Aorta (tissue), 5 donors: ENCODE measurements at regions of chr5 and their contacts with region 1.

Region 1: GRCh38 chr5:132490486-132491367 is at the start of gene IRF1:
- DNase-seq: peak; percentile 98 to 99
- ATAC-seq: peak; percentile 95
- H3K4me3 ChIP-seq: peak within 1 kb of the TSS; percentile 40 to 57
- H3K27ac ChIP-seq: peak within 1 kb of the TSS; percentile 39 to 79
- H3K4me1 ChIP-seq: no peaks in the 10 kb centered on the region
- H3K27me3 ChIP-seq: no peaks in the 10 kb centered on the region
- total RNA-seq, gene IRF1: 26.8 to 36.1 TPM

Region 2: GRCh38 chr5:132260714-132261551 is 229.8 kb before region 1 on chr5:
- intact Hi-C with region 1: loop called (anchors 10 kb)
- DNase-seq: peak; percentile 79 to 84
- ATAC-seq: no peak
- H3K4me3 ChIP-seq: no peak overlapping the region
- H3K27ac ChIP-seq: peak overlapping the region in 1 of 2 donors; percentile 13
- H3K4me1 ChIP-seq: no peaks in the 10 kb centered on the region
- H3K27me3 ChIP-seq: no peaks in the 10 kb centered on the region

Region 3: GRCh38 chr5:132410451-132411381 is 80.0 kb before region 1 on chr5:
- intact Hi-C with region 1: loop called in 1 of 2 experiments (anchors 2 kb)
- DNase-seq: peak; percentile 89 to 93
- ATAC-seq: peak; percentile 86
- H3K4me3 ChIP-seq: peak overlapping the region; percentile 54 to 60
- H3K27ac ChIP-seq: peak overlapping the region; percentile 51 to 68
- H3K4me1 ChIP-seq: peaks cover 0 to 2% of the 10 kb centered on the region in 2 donors
- H3K27me3 ChIP-seq: no peaks in the 10 kb centered on the region

Region 4: GRCh38 chr5:132419502-132420468 is 70.9 kb before region 1 on chr5:
- intact Hi-C with region 1: loop called in 1 of 2 experiments (anchors 5 kb)
- DNase-seq: peak; percentile 73 to 86
- ATAC-seq: peak; percentile 90
- H3K4me3 ChIP-seq: no peak overlapping the region
- H3K27ac ChIP-seq: peak overlapping the region in 1 of 2 donors; percentile 43
- H3K4me1 ChIP-seq: peaks cover 4 to 9% of the 10 kb centered on the region in 2 donors
- H3K27me3 ChIP-seq: no peaks in the 10 kb centered on the region